ENCODE measurements at regions of chr4 and their contacts with region 1.

Region 1: DNA sequence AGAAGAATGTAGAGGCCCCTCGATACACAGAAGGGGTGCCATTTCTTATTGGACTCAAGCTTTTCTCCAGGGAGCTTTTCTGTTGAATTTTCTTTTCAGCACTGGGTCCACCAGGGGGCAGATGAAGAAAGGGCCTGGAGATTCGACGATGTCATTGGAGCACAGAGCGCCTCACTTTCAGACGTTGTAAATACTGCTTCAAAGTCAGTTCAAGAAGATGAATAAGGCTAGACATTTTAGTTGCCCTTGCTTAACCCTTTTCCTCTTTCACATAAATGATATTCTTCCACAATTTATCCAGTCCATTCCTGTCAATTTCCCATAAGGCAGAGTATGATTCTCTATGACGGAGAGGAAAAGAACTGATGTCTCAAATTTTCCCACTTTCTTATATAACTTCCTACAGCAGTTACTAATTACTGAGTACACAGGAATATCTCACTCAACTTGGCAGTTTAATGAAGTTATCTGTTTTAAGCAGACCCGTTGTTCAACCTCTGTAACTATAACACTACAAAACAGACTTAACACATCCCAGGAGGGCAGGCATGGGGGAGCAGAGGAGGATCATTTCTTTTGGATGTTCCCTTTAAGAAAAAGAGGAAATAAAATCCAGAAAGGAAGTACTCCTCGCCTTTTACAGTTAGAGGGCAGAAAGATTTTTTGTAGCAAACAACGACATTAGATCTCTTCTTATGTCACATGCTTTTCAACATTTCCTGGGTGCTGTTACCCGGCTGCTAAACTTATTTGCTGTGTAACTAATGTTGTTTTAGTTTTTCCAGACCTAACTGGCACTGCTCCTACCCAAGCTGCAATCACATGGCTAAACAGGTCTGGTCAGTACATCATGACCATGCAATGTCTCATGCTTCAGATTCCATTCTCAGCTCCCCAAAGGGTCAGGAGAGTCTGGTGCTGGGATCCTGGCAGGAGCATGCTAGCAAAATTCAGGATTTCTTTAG is 12.2 kb upstream of the CENPU start:
- DNase-seq: peak; percentile 84
- ATAC-seq: peak; percentile 82
- H3K4me3 Mint-ChIP-seq: no peak overlapping the region
- H3K27ac Mint-ChIP-seq: no peak overlapping the region
- H3K4me1 Mint-ChIP-seq: peaks cover 11% of the 10 kb centered on the region
- H3K27me3 Mint-ChIP-seq: peaks cover 5% of the 10 kb centered on the region

Region 2: GRCh38 chr4:184684491-184685189 is 61.5 kb before region 1 on chr4:
- CTCF ChIA-PET with region 1: no interaction called
- POLR2A ChIA-PET with region 1: no interaction called
- DNase-seq: no peak
- ATAC-seq: no peak
- H3K4me3 Mint-ChIP-seq: no peak overlapping the region
- H3K27ac Mint-ChIP-seq: peak overlapping the region; percentile 62
- H3K4me1 Mint-ChIP-seq: peaks cover 20% of the 10 kb centered on the region
- H3K27me3 Mint-ChIP-seq: no peaks in the 10 kb centered on the region

Region 3: DNA sequence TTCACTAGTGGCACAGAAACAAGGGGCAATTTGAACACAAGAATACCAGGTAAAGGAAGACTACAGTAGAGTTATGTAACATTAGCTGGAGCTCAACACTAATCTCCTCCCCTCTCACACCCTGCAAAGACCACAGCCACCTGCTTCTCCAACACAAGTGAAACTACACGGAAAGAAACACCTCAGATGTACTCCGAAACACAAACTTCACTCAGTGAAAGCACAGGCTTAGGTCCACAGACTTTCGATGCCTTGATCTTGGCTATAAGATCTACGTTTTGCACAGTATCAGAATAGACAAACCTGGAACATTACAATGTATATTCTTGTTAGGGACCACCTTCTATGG is 72.1 kb after region 1 on chr4:
- CTCF ChIA-PET with region 1: interaction called, 32 read pairs
- POLR2A ChIA-PET with region 1: no interaction called
- DNase-seq: no peak
- ATAC-seq: peak; percentile 47
- H3K4me3 Mint-ChIP-seq: no peak overlapping the region
- H3K27ac Mint-ChIP-seq: no peak overlapping the region
- H3K4me1 Mint-ChIP-seq: peaks cover 33% of the 10 kb centered on the region
- H3K27me3 Mint-ChIP-seq: no peaks in the 10 kb centered on the region

Region 4: GRCh38 chr4:184983672-184984356 is 237.7 kb after region 1 on chr4:
- CTCF ChIA-PET with region 1: interaction called, 14 read pairs
- POLR2A ChIA-PET with region 1: interaction called, 3 read pairs
- DNase-seq: peak; percentile 59
- ATAC-seq: peak; percentile 73
- H3K4me3 Mint-ChIP-seq: no peak overlapping the region
- H3K27ac Mint-ChIP-seq: no peak overlapping the region
- H3K4me1 Mint-ChIP-seq: no peaks in the 10 kb centered on the region
- H3K27me3 Mint-ChIP-seq: peaks cover 9% of the 10 kb centered on the region